A673 (cell line): ENCODE measurements at regions of chrX and their contacts with region 1.

Region 1: DNA sequence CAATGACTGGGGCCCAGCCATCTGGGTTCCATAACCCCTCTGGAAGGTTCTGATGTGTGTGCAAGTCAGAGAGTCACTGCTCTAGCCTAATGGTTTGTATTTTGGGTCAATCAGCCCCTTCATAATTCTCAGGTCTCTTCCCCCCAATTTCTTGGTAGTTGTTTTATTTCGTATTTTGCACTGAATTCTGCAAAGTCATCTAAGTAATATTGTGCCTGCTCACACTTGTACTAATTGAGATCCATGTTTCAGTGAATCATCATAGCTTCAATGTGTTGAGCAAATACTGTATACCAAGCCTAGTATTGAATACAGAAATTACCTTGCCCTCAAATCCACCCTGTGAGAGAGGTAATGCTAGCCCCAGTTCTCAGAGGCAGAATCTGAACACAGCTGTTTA is 28.0 kb upstream of the TBL1X start:
- DNase-seq: no peak
- H3K4me3 ChIP-seq: no peak overlapping the region
- H3K27ac ChIP-seq: no peak overlapping the region
- H3K4me1 ChIP-seq: no peaks in the 10 kb centered on the region
- H3K27me3 ChIP-seq: no peaks in the 10 kb centered on the region
- CTCF ChIP-seq: no peak

Region 2: GRCh38 chrX:9729171-9729885 is 292.5 kb after region 1 on chrX:
- CTCF ChIA-PET with region 1: no interaction called
- POLR2A ChIA-PET with region 1: interaction called, 13 read pairs
- intact Hi-C with region 1: no loop called
- DNase-seq: no peak
- H3K4me3 ChIP-seq: no peak overlapping the region
- H3K27ac ChIP-seq: no peak overlapping the region
- H3K4me1 ChIP-seq: no peaks in the 10 kb centered on the region
- H3K27me3 ChIP-seq: no peaks in the 10 kb centered on the region
- CTCF ChIP-seq: no peak